ENCODE measurements at regions of chr3 and their contacts with region 1.

Region 1: GRCh38 chr3:29515451-29515850 is 234.6 kb downstream of the RBMS3 start:
- DNase-seq: no peak
- ATAC-seq: peak; percentile 92 to 93
- H3K4me3 ChIP-seq: no peak overlapping the region
- H3K27ac ChIP-seq: peak overlapping the region; percentile 17 to 47 (median 31)
- H3K4me1 ChIP-seq: peaks cover 39 to 50% of the 10 kb centered on the region in 2 donors
- H3K27me3 ChIP-seq: no peaks in the 10 kb centered on the region
- CTCF ChIP-seq: no peak
- POLR2A ChIP-seq: no peak

Region 2: GRCh38 chr3:29332195-29332637 is 183.2 kb before region 1 on chr3:
- in situ Hi-C with region 1: no loop called
- intact Hi-C with region 1: loop called (anchors 5 kb)
- DNase-seq: no peak
- ATAC-seq: no peak
- H3K4me3 ChIP-seq: peak overlapping the region in 1 of 4 donors; percentile 18
- H3K27ac ChIP-seq: peak overlapping the region; percentile 22 to 73 (median 56)
- H3K4me1 ChIP-seq: peaks cover 74 to 80% of the 10 kb centered on the region in 2 donors
- H3K27me3 ChIP-seq: no peaks in the 10 kb centered on the region
- CTCF ChIP-seq: no peak
- POLR2A ChIP-seq: no peak

Region 3: GRCh38 chr3:29412110-29412509 is 103.3 kb before region 1 on chr3:
- in situ Hi-C with region 1: no loop called
- intact Hi-C with region 1: no loop called
- DNase-seq: no peak
- ATAC-seq: no peak
- H3K4me3 ChIP-seq: no peak overlapping the region
- H3K27ac ChIP-seq: no peak overlapping the region
- H3K4me1 ChIP-seq: peaks cover 36 to 53% of the 10 kb centered on the region in 2 donors
- H3K27me3 ChIP-seq: no peaks in the 10 kb centered on the region
- CTCF ChIP-seq: no peak
- POLR2A ChIP-seq: no peak

Measured in gastrocnemius medialis (tissue), 4 donors.